GM12878 (cell line): ENCODE measurements at regions of chr6 and their contacts with region 1.

Region 1: GRCh38 chr6:77415706-77416105 is 47.6 kb downstream of the HTR1B start:
- DNase-seq: no peak
- ATAC-seq: peak; percentile 85
- H3K4me3 ChIP-seq: no peak overlapping the region
- H3K27ac ChIP-seq: no peak overlapping the region
- H3K4me1 ChIP-seq: no peaks in the 10 kb centered on the region
- H3K27me3 ChIP-seq: no peaks in the 10 kb centered on the region
- CTCF ChIP-seq: no peak
- EP300 ChIP-seq: no peak
- POLR2A ChIP-seq: no peak
- RAD21 ChIP-seq: no peak

Region 2: GRCh38 chr6:77403424-77403823 is 12.3 kb before region 1 on chr6:
- CTCF ChIA-PET with region 1: interaction called, 4 read pairs
- POLR2A ChIA-PET with region 1: interaction called, 5 read pairs
- RAD21 ChIA-PET with region 1: interaction called, 6 read pairs
- SMC1A ChIA-PET with region 1: interaction called, 23 read pairs
- in situ Hi-C with region 1: no loop called
- intact Hi-C with region 1: no loop called
- DNase-seq: no peak
- ATAC-seq: no peak
- H3K4me3 ChIP-seq: no peak overlapping the region
- H3K27ac ChIP-seq: no peak overlapping the region
- H3K4me1 ChIP-seq: no peaks in the 10 kb centered on the region
- H3K27me3 ChIP-seq: no peaks in the 10 kb centered on the region
- CTCF ChIP-seq: no peak
- EP300 ChIP-seq: no peak
- POLR2A ChIP-seq: no peak
- RAD21 ChIP-seq: no peak

Region 3: DNA sequence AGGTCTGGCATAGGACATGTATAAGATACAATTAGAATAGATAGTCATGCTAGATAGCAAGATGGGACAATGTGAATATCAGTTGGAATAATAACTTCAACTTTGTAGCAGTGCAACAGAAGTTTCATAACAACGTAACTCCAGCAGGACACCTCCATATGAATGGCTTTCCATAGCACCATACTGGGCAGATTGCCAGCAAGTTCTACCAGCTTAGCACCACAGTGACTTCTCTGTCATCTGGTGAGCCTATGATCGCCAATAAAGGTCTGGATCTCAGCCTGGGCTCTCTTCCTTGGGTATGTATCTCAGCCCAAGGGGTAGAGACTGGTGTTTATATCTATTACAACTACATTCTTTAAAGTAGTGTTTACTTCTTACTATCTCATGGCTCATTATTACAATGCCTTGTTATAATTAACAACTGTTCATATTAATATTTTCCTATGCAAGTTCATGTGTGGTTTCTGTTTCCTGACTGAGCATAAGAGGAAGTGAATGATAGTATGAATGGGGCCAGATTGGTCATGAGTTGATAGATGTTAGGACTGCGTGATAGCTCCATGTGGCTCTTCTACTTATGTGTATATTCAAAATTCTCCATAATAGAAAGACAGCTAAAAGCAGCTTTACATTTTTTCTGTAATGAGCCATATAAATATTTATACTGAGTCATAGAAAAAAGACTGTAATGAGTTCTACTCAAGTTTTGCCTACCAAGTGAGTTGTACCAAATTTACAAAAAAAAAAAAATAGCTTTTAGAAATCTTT is 24.7 kb after region 1 on chr6:
- CTCF ChIA-PET with region 1: interaction called, 4 read pairs
- POLR2A ChIA-PET with region 1: no interaction called
- RAD21 ChIA-PET with region 1: interaction called, 3 read pairs
- SMC1A ChIA-PET with region 1: interaction called, 11 read pairs
- in situ Hi-C with region 1: no loop called
- intact Hi-C with region 1: no loop called
- DNase-seq: no peak
- ATAC-seq: peak; percentile 57
- H3K4me3 ChIP-seq: no peak overlapping the region
- H3K27ac ChIP-seq: no peak overlapping the region
- H3K4me1 ChIP-seq: no peaks in the 10 kb centered on the region
- H3K27me3 ChIP-seq: no peaks in the 10 kb centered on the region
- CTCF ChIP-seq: no peak
- EP300 ChIP-seq: no peak
- POLR2A ChIP-seq: no peak
- RAD21 ChIP-seq: no peak